ENCODE measurements at regions of chr4 and their contacts with region 1.

Region 1: DNA sequence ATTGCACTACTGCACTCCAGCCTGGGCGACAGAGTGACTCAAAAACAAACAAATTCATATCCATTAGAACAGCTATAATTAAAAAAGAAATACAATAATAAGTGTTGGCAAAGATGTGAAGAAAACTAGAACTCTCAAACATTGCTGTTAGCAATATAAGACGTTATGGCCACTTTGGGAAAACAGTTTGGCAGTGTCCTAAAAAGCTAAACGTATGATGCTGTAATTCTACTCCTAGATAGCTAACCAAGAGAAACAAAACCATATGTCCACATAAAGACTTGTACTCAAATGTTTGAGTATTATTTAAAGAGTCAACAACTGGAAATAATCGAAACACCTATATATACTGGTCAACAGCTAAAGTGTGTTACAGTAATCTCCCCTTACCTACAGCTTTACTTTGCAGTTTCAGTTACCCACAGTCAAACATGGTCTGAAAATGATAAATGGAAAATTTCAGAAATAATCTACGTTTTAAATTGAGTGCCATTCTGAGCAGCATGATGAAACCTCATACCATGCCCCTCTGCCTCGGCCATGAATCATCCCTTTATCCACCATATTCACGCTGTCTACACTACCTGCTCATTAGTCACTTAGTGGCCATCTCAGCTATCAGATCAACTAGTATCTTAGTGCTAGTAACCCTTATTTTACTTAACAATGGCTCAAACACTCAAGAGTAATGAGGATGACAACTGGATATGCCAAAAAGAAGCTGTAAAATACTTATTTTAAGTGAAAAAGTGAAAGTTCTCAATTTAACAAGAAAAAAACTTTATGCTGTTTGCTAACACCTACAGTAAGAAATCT is 4.9 kb downstream of the ELF2 start:
- DNase-seq: no peak
- H3K4me3 ChIP-seq: no peak overlapping the region
- H3K27ac ChIP-seq: no peak overlapping the region
- H3K4me1 ChIP-seq: no peaks in the 10 kb centered on the region
- H3K27me3 ChIP-seq: no peaks in the 10 kb centered on the region
- CTCF ChIP-seq: no peak

Region 2: GRCh38 chr4:139042981-139043460 is 129.1 kb before region 1 on chr4:
- intact Hi-C with region 1: no loop called
- DNase-seq: no peak
- H3K4me3 ChIP-seq: no peak overlapping the region
- H3K27ac ChIP-seq: no peak overlapping the region
- H3K4me1 ChIP-seq: no peaks in the 10 kb centered on the region
- H3K27me3 ChIP-seq: no peaks in the 10 kb centered on the region
- CTCF ChIP-seq: no peak

Region 3: DNA sequence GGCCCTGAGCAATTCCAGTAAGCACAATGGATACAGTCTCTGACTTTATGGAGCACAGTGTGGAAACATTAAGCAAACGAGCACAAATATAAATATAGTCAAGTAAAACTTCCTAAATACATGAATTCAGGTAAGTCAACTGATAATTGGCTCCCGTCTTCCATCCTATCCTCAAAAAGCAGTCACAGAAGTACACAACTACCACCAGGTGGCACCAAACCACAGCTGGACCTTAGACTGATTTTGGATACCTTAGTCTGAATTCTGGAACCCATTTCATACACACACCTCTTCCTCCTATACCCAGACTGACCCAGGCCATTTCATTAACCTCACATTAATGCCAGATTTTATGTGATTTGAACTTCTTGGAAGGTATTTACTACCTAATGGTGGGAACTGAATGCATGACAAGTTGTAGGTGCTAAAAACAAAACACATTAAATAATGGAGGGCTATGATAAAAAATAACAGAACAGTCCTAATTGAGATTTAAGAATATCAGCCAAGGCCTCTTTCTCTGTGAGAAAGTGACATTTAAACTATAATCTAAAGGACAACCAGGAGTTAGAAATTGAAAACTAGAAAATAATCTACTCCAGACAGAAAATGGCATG is 72.6 kb before region 1 on chr4:
- intact Hi-C with region 1: loop called (anchors 5 kb)
- DNase-seq: peak; percentile 72
- H3K4me3 ChIP-seq: no peak overlapping the region
- H3K27ac ChIP-seq: no peak overlapping the region
- H3K4me1 ChIP-seq: no peaks in the 10 kb centered on the region
- H3K27me3 ChIP-seq: no peaks in the 10 kb centered on the region
- CTCF ChIP-seq: peak; percentile 84

Region 4: DNA sequence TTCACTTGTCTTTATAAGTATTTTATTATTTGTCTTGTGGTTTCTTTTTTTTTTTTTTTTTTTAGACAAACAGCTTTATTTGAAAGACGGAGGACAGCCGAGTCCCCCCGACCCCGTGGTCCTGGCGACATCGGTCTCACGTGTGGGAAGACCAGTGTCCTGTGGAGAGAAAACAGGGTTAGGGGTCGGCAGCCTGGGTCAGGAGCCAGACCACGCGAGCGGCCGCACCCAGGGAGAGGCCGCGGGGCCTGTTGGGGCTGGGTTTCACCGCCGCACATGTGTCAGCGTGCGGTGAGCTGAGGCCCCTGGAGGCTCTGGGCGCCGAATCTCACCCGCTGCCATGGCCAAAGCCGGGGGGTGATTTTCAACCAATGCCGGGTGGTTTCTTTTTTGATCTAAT is 264.0 kb after region 1 on chr4:
- intact Hi-C with region 1: no loop called
- DNase-seq: no peak
- H3K4me3 ChIP-seq: no peak overlapping the region
- H3K27ac ChIP-seq: no peak overlapping the region
- H3K4me1 ChIP-seq: no peaks in the 10 kb centered on the region
- H3K27me3 ChIP-seq: no peaks in the 10 kb centered on the region
- CTCF ChIP-seq: no peak

Region 5: GRCh38 chr4:139704915-139705485 is 532.9 kb after region 1 on chr4:
- intact Hi-C with region 1: no loop called
- DNase-seq: no peak
- H3K4me3 ChIP-seq: no peak overlapping the region
- H3K27ac ChIP-seq: no peak overlapping the region
- H3K4me1 ChIP-seq: no peaks in the 10 kb centered on the region
- H3K27me3 ChIP-seq: no peaks in the 10 kb centered on the region
- CTCF ChIP-seq: no peak

Measured in colonic mucosa (tissue), 4 donors.